ENCODE measurements at regions of chr19 and their contacts with region 1.

Region 1: GRCh38 chr19:18160971-18161635 is 8.1 kb downstream of the PIK3R2 start:
- DNase-seq: peak; percentile 65 to 93 (median 82)
- ATAC-seq: peak; percentile 99
- H3K4me3 ChIP-seq: peak overlapping the region in 1 of 2 experiments; percentile 19
- H3K4me3 Mint-ChIP-seq: peak overlapping the region; percentile 68
- H3K27ac ChIP-seq: peak overlapping the region in 1 of 2 experiments; percentile 30
- H3K27ac Mint-ChIP-seq: no peak overlapping the region
- H3K4me1 ChIP-seq: peaks cover 14% of the 10 kb centered on the region
- H3K4me1 Mint-ChIP-seq: peaks cover 13% of the 10 kb centered on the region
- H3K27me3 ChIP-seq: no peaks in the 10 kb centered on the region
- H3K27me3 Mint-ChIP-seq: no peaks in the 10 kb centered on the region
- CTCF ChIP-seq: peak; percentile 55

Region 2: DNA sequence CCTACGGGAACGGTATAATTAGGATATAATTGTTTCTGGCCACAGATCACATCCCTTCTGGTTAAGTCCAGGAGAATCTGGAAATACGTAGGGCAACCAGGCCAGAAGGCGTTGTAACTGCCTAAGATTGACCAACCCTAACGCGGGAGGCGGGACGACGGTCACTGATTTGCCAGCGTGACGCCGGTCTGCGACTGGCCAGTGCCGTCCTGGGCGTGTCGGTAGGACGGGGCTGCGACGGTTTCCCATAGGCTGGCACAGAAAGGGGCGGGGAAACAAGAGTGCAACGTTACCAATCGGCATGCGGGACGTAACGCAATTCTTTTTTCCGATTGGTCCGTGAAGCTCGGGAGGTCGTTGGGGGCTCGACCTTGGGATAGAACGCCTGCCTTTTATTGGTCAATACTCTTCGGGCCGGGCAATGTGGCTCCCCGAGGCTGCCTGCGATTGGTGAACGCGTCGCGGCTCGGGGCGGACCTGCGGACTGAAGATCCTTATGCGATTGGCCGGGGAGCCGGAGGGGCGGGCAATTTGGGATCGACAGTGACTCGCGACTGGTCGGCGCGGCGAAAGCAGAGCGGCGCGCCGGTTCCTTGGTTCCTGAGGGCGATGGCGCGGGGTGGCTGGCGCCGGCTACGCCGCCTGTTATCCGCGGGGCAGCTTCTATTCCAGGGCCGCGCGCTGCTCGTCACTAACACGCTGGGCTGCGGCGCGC is 31.7 kb after region 1 on chr19 and contains the start of gene MPV17L2:
- CTCF ChIA-PET with region 1: interaction called, 12 read pairs
- POLR2A ChIA-PET with region 1: no interaction called
- intact Hi-C with region 1: no loop called
- DNase-seq: peak; percentile 95 to 100 (median 97)
- ATAC-seq: peak; percentile 84
- H3K4me3 ChIP-seq: peak within 1 kb of the TSS; percentile 73
- H3K4me3 Mint-ChIP-seq: peak within 1 kb of the TSS; percentile 87
- H3K27ac ChIP-seq: peak within 1 kb of the TSS; percentile 64 to 82
- H3K27ac Mint-ChIP-seq: peak within 1 kb of the TSS; percentile 90
- H3K4me1 ChIP-seq: peaks cover 18% of the 10 kb centered on the region
- H3K4me1 Mint-ChIP-seq: peaks cover 22% of the 10 kb centered on the region
- H3K27me3 ChIP-seq: no peaks in the 10 kb centered on the region
- H3K27me3 Mint-ChIP-seq: no peaks in the 10 kb centered on the region
- CTCF ChIP-seq: no peak
- total RNA-seq, gene MPV17L2: 4.0 to 5.2 TPM

Region 3: DNA sequence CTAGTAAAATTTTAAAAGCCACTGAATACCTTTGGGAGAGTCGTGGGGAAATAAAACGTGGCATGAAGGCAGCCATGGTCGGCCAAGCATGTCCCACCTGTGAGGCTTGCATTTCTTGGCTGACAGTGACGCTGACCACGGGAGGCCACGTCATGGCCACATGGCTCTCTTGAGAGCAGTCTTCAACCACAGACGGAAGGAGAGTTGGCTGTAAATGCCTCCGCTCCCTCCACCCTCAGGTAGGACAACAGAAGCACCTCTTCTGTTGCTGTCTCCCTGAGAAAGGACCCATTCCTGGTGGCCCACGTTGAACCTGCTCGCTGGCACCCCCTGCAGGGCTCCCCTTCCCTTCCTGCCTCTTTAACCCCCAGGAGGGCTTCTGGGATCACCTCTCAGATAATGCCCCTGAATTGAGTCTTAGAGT is 247.0 kb after region 1 on chr19:
- CTCF ChIA-PET with region 1: no interaction called
- POLR2A ChIA-PET with region 1: no interaction called
- intact Hi-C with region 1: loop called in 1 of 2 experiments (anchors 1 kb)
- DNase-seq: peak in 2 of 9 experiments; percentile 33 to 40
- ATAC-seq: no peak
- H3K4me3 ChIP-seq: no peak overlapping the region
- H3K4me3 Mint-ChIP-seq: no peak overlapping the region
- H3K27ac ChIP-seq: no peak overlapping the region
- H3K27ac Mint-ChIP-seq: no peak overlapping the region
- H3K4me1 ChIP-seq: no peaks in the 10 kb centered on the region
- H3K4me1 Mint-ChIP-seq: peaks cover 2% of the 10 kb centered on the region
- H3K27me3 ChIP-seq: no peaks in the 10 kb centered on the region
- H3K27me3 Mint-ChIP-seq: peaks cover 2% of the 10 kb centered on the region
- CTCF ChIP-seq: peak; percentile 20